ENCODE measurements at regions of chr13 and their contacts with region 1.

Region 1: DNA sequence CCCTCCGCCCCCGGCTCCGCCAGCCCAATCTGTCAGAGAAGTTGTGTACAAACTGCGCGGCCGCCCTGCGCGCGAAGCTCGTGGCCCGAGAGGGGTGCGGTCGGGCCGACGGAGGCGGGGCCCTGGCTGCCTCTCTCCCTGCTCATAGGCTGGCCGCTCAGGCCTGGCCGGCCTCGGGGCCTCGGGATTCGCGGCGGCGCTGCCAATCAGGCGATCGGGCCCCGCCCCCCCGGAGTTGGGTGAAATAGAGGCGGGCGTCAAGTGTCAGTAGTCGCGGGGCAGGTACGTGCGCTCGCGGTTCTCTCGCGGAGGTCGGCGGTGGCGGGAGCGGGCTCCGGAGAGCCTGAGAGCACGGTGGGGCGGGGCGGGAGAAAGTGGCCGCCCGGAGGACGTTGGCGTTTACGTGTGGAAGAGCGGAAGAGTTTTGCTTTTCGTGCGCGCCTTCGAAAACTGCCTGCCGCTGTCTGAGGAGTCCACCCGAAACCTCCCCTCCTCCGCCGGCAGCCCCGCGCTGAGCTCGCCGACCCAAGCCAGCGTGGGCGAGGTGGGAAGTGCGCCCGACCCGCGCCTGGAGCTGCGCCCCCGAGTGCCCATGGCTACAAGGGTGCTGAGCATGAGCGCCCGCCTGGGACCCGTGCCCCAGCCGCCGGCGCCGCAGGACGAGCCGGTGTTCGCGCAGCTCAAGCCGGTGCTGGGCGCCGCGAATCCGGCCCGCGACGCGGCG is at the start of gene KLF5:
- DNase-seq: peak; percentile 97
- ATAC-seq: peak; percentile 98
- H3K4me3 Mint-ChIP-seq: peak within 1 kb of the TSS; percentile 82
- H3K27ac Mint-ChIP-seq: peak within 1 kb of the TSS; percentile 80
- H3K4me1 Mint-ChIP-seq: peaks cover 23% of the 10 kb centered on the region
- H3K27me3 Mint-ChIP-seq: peaks cover 35% of the 10 kb centered on the region
- total RNA-seq, gene KLF5: 5.4 to 7.4 TPM

Region 2: GRCh38 chr13:72839831-72840426 is 219.0 kb before region 1 on chr13:
- CTCF ChIA-PET with region 1: interaction called, 11 read pairs
- POLR2A ChIA-PET with region 1: interaction called, 3 read pairs
- DNase-seq: peak; percentile 59
- ATAC-seq: peak; percentile 85
- H3K4me3 Mint-ChIP-seq: no peak overlapping the region
- H3K27ac Mint-ChIP-seq: no peak overlapping the region
- H3K4me1 Mint-ChIP-seq: no peaks in the 10 kb centered on the region
- H3K27me3 Mint-ChIP-seq: no peaks in the 10 kb centered on the region

Measured in activated CD8-positive, alpha-beta T cell treated with anti-CD3 and anti-CD28 coated beads, Interleukin-2, amount 10 ng/mL, durations not matched to agents 7 days and 5 days (primary cell).